ENCODE measurements at regions of chr7 and their contacts with region 1.

Region 1: GRCh38 chr7:88291398-88292173 is 15.1 kb downstream of the STEAP4 start:
- DNase-seq: peak; percentile 85 to 97
- H3K4me3 ChIP-seq: no peak overlapping the region; the same call in 1 of the 2 replicates
- H3K27ac ChIP-seq: peak overlapping the region; percentile 97
- H3K4me1 ChIP-seq: peaks cover 58% of the 10 kb centered on the region
- H3K27me3 ChIP-seq: no peaks in the 10 kb centered on the region
- CTCF ChIP-seq: no peak

Region 2: GRCh38 chr7:88219781-88220747 is 71.5 kb before region 1 on chr7 and contains the start of gene SRI:
- CTCF ChIA-PET with region 1: no interaction called
- POLR2A ChIA-PET with region 1: interaction called, 16 read pairs
- intact Hi-C with region 1: no loop called
- DNase-seq: peak; percentile 79 to 93
- H3K4me3 ChIP-seq: peak within 1 kb of the TSS; percentile 77
- H3K27ac ChIP-seq: peak within 1 kb of the TSS; percentile 97
- H3K4me1 ChIP-seq: peaks cover 46% of the 10 kb centered on the region
- H3K27me3 ChIP-seq: no peaks in the 10 kb centered on the region
- CTCF ChIP-seq: peak; percentile 88
- total RNA-seq, gene SRI: 235 and 269 TPM in 2 replicates

Region 3: DNA sequence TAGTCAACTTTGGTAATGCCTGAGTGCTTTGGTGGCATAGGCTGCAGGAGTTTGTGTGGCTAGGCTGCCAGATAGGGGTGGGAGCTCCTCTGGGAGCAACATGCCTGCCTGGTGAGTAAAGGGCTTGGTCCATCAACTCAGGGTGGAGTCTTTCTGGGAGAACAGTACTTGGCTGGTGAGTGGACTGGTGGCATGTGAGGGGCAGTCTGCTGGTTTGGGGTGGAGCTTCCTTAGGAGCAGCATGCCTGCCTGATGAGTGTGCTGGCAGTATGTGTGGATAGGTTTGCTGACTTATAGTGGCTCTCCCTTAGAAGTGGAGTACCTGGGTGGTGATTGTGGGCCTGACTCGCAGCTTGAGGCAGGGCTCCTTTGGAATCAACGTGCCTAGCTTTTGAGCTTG is 36.9 kb before region 1 on chr7:
- CTCF ChIA-PET with region 1: no interaction called
- POLR2A ChIA-PET with region 1: interaction called, 36 read pairs
- intact Hi-C with region 1: loop called (anchors 1 kb)
- DNase-seq: peak; percentile 89 to 95
- H3K4me3 ChIP-seq: peak overlapping the region; percentile 23; the same call in 1 of the 2 replicates
- H3K27ac ChIP-seq: peak overlapping the region; percentile 88
- H3K4me1 ChIP-seq: peaks cover 56% of the 10 kb centered on the region
- H3K27me3 ChIP-seq: no peaks in the 10 kb centered on the region
- CTCF ChIP-seq: no peak

Region 4: DNA sequence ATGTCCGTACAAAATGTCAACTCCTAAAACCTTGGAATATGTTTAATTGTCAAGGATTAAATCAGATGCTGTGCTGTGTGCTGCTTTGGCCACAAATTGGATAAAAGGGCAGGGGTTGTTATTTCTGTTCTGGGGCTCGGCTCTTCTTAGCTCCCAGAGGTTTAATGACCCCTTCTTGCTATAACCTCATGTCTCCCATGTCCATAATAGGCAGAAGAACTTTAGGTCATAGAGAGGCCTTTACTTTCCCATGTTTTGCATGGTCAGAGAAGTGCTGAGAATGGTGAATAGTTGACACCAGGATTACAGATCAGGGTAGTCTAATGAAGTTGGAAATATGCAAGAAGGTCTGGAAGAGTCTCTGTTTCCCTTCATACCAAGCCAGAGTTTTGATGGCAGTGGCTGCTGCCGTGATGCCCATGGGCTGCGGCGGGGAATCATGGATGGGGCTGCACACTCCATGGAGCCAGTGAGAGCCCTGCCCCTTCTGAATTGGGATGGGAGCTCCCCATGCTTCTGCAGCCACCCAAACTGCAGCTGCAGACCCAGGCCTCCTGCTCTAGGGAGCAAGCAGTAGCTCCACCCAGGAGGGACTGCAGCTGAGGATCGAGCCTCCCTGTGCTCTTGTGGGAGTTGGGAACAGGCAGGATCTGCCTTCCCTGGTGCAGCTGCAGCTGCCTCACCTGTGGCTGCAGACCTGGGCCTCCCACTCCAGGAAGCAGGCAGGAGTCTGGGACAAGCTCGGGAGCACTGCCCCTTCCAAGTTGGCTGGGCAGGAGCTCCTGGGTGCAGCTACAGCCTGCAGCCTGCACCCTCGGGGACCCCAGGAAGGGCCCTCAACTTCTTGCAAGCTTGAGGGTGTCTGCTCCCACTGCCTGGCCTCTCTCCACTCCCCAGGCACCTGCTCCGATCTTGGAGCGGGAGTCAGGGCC is 38.2 kb after region 1 on chr7:
- CTCF ChIA-PET with region 1: no interaction called
- POLR2A ChIA-PET with region 1: interaction called, 12 read pairs
- intact Hi-C with region 1: no loop called
- DNase-seq: no peak
- H3K4me3 ChIP-seq: no peak overlapping the region
- H3K27ac ChIP-seq: no peak overlapping the region
- H3K4me1 ChIP-seq: no peaks in the 10 kb centered on the region
- H3K27me3 ChIP-seq: no peaks in the 10 kb centered on the region
- CTCF ChIP-seq: no peak

Region 5: DNA sequence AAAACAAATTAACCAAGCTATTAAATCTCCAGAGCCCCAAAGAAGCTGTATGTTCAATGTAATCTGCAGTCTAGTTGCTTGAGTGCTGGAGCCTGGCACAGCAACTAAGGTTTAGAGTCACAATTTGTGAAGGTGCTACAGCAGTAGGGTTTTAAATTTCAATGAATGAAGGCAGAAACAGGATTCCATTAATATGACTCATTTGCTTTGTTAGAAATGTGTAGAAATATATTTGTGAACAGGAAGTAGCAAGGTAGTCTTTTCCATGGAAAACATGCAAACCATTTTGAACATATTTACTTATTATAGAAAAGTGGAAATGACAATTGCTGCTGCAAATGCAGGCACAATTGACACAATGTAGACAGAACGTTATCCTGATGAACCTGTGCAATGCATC is 164.1 kb after region 1 on chr7:
- CTCF ChIA-PET with region 1: no interaction called
- POLR2A ChIA-PET with region 1: no interaction called
- intact Hi-C with region 1: loop called (anchors 1 kb)
- DNase-seq: peak; percentile 15 to 66
- H3K4me3 ChIP-seq: no peak overlapping the region
- H3K27ac ChIP-seq: peak overlapping the region; percentile 54
- H3K4me1 ChIP-seq: peaks cover 13% of the 10 kb centered on the region
- H3K27me3 ChIP-seq: no peaks in the 10 kb centered on the region
- CTCF ChIP-seq: no peak

Measured in PC-9 (cell line).